ENCODE measurements at regions of chr7 and their contacts with region 1.

Region 1: GRCh38 chr7:149071641-149072437 is 18.7 kb downstream of the ZNF786 start:
- DNase-seq: peak; percentile 31 to 79
- ATAC-seq: peak; percentile 81 to 94
- H3K4me3 ChIP-seq: no peak overlapping the region
- H3K27ac ChIP-seq: no peak overlapping the region
- H3K4me1 ChIP-seq: no peaks in the 10 kb centered on the region
- CTCF ChIP-seq: peak; percentile 41
- EP300 ChIP-seq: no peak
- POLR2A ChIP-seq: no peak
- RAD21 ChIP-seq: peak; percentile 35 to 39; a peak in 3 of 5 replicates

Region 2: DNA sequence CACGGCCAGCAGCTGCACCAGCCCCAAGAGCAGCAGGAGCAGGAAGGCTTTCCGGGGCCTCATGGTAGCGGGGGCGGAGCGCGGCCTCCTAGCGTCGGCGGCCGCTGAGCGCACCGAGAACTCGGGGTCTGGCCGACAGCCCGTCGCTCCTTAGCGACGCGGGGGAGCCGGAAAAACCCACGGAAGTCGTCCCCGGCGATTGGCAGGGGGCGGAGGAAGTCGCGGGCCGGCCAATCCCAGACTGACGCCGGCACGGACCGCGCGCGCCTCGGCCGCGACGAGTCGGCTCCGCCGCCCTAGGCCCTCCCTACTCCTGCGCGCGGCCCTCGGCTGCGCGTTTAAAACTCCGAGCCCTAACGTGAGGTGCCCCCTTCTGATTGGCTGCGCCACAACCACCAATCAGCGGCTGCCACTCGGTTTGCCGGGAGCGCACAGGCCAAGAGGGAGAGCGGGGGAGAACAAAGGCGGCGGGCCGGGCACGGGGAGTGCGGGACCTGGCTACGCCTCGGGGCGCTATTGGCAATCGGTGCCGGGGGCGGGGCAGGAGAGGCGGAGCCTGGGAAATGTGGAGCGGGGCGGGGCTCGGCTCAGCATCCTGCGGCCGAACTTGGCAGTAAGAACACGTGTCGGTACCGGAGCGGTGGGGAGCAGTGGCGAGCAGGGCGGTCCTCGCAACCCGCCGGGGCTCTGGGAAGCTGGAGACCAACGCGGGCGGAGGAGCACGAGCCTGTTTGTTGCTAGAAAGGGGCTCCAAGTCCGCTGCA is 43.3 kb before region 1 on chr7 and contains the start of gene PDIA4:
- CTCF ChIA-PET with region 1: interaction called, 35 read pairs
- POLR2A ChIA-PET with region 1: no interaction called
- DNase-seq: peak; percentile 99
- ATAC-seq: peak; percentile 96 to 97
- H3K4me3 ChIP-seq: peak within 1 kb of the TSS; percentile 94
- H3K27ac ChIP-seq: peak within 1 kb of the TSS; percentile 96 to 98
- H3K4me1 ChIP-seq: peaks cover 14% of the 10 kb centered on the region
- CTCF ChIP-seq: no peak
- EP300 ChIP-seq: no peak
- POLR2A ChIP-seq: peak; percentile 94
- RAD21 ChIP-seq: no peak; a peak in 1 of 5 replicates
- polyA plus RNA-seq, gene PDIA4: 186 and 214 TPM in 2 replicates

Region 3: GRCh38 chr7:149060156-149060555 is 11.7 kb before region 1 on chr7:
- CTCF ChIA-PET with region 1: interaction called, 33 read pairs
- POLR2A ChIA-PET with region 1: no interaction called
- DNase-seq: no peak
- ATAC-seq: no peak
- H3K4me3 ChIP-seq: no peak overlapping the region
- H3K27ac ChIP-seq: no peak overlapping the region
- H3K4me1 ChIP-seq: no peaks in the 10 kb centered on the region
- CTCF ChIP-seq: no peak
- EP300 ChIP-seq: no peak
- POLR2A ChIP-seq: no peak
- RAD21 ChIP-seq: no peak

Region 4: DNA sequence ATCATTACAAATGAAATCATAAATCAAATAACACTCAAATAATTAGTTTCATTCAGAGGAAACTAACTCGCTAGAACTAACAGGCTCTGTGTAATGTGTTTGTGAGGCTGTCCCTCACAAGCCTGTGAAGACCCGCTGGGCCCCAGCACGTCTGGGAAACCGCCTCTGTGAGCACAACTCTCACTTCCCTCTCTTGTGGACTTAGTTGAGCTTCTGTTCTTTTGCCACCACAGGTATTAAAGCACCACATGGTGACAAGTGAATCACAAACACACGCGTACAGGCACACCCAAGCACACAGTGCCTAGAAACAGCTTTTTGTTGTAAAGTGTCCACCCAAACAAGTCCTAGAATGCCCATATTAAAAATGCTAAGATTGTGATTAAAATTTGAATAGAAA is 338.1 kb after region 1 on chr7:
- CTCF ChIA-PET with region 1: no interaction called
- POLR2A ChIA-PET with region 1: no interaction called
- DNase-seq: no peak
- ATAC-seq: no peak
- H3K4me3 ChIP-seq: no peak overlapping the region
- H3K27ac ChIP-seq: no peak overlapping the region
- H3K4me1 ChIP-seq: no peaks in the 10 kb centered on the region
- CTCF ChIP-seq: no peak
- EP300 ChIP-seq: no peak
- POLR2A ChIP-seq: no peak
- RAD21 ChIP-seq: no peak

Measured in A549 (cell line).